ENCODE measurements at regions of chr16 and their contacts with region 1.

Region 1: DNA sequence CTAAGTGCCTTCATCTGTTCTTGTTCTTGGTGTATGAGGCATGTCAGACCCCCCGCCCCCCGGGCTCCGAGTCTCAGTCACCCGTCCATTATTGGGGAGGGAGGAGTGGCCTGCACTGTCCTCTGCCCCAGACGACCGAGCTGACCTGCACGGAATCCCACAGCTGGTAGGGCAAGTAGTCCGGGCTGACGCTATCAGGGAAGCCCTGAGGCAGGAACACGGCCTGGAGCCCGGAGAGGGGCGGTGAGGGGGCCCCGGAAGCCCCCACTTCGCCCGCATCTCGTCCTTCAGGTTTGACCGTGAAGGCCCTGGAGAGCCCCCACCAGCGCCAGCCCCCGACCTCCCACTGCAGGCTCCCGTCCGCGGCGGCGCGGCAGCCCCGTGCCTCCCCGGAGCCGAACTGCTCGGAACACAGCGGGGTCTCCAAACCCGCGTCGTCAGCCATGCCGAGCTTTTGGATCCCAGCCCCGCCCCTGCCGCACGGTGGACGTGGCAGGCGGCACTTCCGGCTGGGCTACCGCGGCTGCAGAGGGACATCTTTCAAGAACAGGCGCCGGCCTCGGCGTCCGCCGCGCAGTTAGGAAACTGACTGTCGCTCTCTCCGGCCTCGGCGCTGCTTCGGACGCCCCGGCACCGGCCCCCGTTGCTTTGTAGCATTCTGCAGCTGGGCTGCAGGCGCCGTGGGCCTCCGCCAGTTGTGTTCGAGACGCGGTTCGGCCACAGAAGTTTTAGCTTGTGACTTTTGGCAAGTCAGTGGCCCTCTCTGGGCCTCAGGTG is at the start of gene RUSF1:
- DNase-seq: peak; percentile 71
- ATAC-seq: peak; percentile 85
- H3K4me3 ChIP-seq: peak within 1 kb of the TSS; percentile 98
- H3K27ac ChIP-seq: peak within 1 kb of the TSS; percentile 58
- H3K4me1 ChIP-seq: peaks cover 15% of the 10 kb centered on the region
- H3K27me3 ChIP-seq: no peaks in the 10 kb centered on the region
- CTCF ChIP-seq: no peak
- total RNA-seq, gene RUSF1: 39.9 and 44.3 TPM in 2 replicates

Region 2: GRCh38 chr16:31451681-31452351 is 56.3 kb before region 1 on chr16:
- CTCF ChIA-PET with region 1: no interaction called
- POLR2A ChIA-PET with region 1: no interaction called
- intact Hi-C with region 1: no loop called
- DNase-seq: peak; percentile 60
- ATAC-seq: peak; percentile 87
- H3K4me3 ChIP-seq: no peak overlapping the region
- H3K27ac ChIP-seq: no peak overlapping the region
- H3K4me1 ChIP-seq: peaks cover 18% of the 10 kb centered on the region
- H3K27me3 ChIP-seq: no peaks in the 10 kb centered on the region
- CTCF ChIP-seq: peak; percentile 55; the same call in 1 of the 2 replicates

Region 3: DNA sequence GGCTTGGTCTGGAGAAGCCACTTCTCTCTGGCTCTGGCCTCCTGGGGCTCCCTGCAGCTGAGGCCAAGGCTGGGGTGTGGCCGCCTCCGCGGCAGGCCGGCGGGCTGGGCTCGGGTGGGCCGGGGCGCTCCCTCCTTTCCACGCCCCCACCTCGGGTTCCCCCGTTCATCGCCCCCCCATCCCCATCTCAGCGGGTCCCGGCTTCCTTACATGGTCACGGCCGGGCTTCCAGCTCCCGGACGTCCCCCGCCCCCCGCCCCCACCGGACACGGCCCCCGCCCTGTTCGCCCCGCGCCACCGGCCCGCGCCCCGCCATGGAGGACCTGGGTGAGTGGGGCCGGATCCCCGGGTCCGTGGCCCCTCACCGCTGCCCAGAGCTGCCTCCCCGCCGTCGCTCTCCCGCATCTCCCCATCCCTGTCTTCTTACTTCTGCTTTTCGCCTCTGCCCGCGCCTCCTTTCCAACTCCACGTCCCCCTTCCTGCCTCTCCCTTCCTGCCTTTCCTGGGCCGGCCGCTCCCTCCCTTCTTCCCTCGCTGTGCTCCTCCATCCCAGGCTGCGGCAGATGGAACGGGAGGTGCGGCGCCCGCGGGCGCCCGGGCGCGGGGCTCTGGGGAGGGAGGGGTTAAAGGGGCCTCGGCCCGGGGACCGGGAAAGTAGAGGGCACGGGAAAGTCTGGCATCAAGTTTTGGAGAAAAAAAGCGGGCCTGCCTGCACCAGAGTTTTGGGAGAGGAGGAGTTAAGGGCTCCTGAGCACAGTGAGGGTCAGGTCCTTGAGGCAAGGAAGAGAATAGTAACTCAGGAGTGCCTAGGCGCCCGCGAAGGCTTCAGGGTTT is 36.0 kb before region 1 on chr16 and contains the start of gene TGFB1I1:
- CTCF ChIA-PET with region 1: no interaction called
- POLR2A ChIA-PET with region 1: no interaction called
- intact Hi-C with region 1: no loop called
- DNase-seq: peak; percentile 8
- ATAC-seq: peak; percentile 64
- H3K4me3 ChIP-seq: peak within 1 kb of the TSS; percentile 73
- H3K27ac ChIP-seq: no peak within 1 kb of the TSS
- H3K4me1 ChIP-seq: no peaks in the 10 kb centered on the region; the same call in 1 of the 2 replicates
- H3K27me3 ChIP-seq: no peaks in the 10 kb centered on the region
- CTCF ChIP-seq: no peak
- total RNA-seq, gene TGFB1I1: 11.2 and 12.5 TPM in 2 replicates

Region 4: DNA sequence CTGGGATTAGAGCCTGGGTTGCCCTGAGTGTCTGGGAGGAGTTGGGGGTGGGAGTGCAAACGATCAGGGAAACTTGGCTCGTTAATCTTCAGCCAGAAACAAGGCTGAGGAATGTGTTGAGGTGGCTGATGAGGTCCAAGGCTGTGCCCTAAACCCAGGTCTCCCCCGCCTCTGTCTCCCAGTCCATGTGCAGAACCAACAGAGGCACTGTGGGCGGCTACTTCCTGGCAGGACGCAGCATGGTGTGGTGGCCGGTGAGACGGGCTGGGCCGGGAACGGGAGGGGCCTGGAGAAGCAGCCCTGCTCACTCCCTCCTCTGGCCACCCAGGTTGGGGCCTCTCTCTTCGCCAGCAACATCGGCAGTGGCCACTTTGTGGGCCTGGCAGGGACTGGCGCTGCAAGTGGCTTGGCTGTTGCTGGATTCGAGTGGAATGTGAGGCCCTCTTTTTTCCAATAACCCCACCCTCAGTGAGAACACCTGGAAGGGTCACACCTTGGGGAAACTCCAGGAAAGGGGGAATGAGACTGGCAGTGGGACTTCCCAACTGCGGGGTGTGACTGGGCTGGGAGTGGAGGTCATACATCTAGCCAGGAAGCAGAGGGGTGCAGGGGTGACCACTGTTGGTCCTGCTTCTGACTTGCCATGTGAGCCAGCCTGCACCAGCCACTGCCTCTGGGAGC is 23.5 kb before region 1 on chr16:
- CTCF ChIA-PET with region 1: no interaction called
- POLR2A ChIA-PET with region 1: no interaction called
- intact Hi-C with region 1: no loop called
- DNase-seq: no peak
- ATAC-seq: no peak
- H3K4me3 ChIP-seq: no peak overlapping the region
- H3K27ac ChIP-seq: no peak overlapping the region
- H3K4me1 ChIP-seq: no peaks in the 10 kb centered on the region; the same call in 1 of the 2 replicates
- H3K27me3 ChIP-seq: no peaks in the 10 kb centered on the region
- CTCF ChIP-seq: no peak

Region 5: GRCh38 chr16:31700526-31701388 is 192.6 kb after region 1 on chr16:
- CTCF ChIA-PET with region 1: no interaction called
- POLR2A ChIA-PET with region 1: no interaction called
- intact Hi-C with region 1: loop called (anchors 5 kb)
- DNase-seq: no peak
- ATAC-seq: peak; percentile 99
- H3K4me3 ChIP-seq: peak overlapping the region; percentile 85
- H3K27ac ChIP-seq: no peak overlapping the region
- H3K4me1 ChIP-seq: peaks cover 5% of the 10 kb centered on the region; the same call in 1 of the 2 replicates
- H3K27me3 ChIP-seq: no peaks in the 10 kb centered on the region
- CTCF ChIP-seq: no peak